Left colon (tissue), 2 donors: ENCODE measurements at regions of chr17 and their contacts with region 1.

Region 1: DNA sequence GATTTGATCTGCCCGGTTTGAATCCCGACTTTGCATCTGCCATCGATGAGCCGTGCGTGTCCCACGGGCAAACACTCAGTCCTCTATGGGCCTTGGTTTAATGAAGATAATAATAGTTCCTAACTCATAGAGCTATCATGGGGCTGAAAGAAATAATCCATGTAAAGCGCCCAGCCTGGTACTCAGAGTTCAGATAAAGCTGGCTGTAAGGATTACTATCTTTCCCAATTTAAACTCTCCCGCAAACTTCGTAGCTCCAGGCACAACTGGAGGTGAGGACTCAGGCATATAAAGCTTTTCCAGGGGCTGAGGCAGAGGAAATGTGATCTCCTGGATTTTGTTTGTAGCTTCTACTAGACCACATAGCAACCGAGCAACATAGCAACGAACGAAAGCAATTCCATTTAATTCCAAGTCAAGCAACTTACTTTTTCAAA is 16.3 kb downstream of the ALOX15 start:
- DNase-seq: no peak
- ATAC-seq: no peak

Region 2: GRCh38 chr17:4420692-4421131 is 204.5 kb before region 1 on chr17:
- intact Hi-C with region 1: loop called in 1 of 2 experiments (anchors 10 kb)
- DNase-seq: peak; percentile 46 to 47
- ATAC-seq: peak; percentile 94

Region 3: DNA sequence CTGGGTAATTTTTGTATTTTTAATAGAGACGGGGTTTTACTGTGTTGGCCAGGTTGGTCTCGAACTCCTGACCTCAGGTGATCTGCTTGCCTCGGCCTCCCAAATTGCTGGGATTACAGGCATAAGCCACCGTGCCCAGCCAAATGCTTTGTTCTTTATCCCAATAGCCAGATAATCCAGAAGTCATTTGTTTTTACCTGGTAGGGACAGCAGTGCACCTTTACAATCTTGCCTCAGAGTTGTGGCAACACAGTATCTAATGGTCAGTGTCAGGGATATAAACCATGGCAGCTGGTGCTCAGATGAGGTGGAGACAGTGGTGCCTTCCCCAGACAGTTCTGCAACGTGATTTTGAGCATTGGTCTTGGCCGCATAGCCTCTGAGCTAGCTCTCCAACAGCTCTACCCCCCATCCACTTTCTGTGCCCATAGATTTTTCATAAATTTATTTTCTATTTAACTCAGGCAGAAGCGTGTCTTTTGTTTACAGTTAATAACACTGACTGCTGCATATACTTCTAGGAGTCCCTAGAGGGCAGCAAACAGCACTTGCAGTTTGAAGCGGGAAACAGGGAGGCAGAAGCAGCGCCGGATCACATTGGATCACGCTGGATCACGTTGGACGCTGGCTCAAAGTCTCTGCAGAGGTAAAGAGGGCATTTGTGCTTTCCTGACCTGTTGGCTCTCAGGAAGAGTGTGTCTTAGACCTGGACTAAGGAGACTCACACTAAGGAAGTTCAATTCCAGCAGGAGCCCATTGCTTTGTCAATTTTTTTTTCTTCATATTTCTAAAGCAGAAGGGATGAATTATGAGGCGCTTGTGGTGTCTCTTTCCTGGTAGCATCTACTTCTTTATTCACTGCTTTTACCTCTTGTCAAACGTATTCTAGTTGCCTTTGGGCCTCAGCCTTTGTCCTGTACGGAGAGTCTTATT is 59.7 kb before region 1 on chr17:
- intact Hi-C with region 1: loop called (anchors 2 to 10 kb)
- DNase-seq: peak; percentile 72 to 81
- ATAC-seq: peak; percentile 71

Region 4: DNA sequence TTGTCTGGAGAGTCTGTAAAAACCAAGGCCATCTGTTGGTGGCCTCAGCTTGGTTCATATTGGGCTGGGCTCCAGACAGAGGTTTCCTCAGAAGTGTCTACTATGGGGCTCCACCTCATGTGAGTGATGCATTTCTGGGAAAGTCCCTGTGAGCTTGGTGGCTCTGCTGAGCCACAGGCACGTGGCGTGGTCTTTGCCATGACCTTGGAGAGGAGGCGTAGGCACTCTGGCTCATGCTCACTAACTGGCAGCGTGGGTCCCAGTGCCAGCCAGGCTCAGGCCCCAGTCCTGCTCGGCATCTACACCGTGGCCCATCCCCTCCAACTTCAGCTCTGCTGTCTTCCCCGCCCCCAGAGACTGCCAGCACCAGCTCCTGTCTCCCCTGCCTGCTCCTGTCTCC is 51.5 kb before region 1 on chr17:
- intact Hi-C with region 1: loop called in 1 of 2 experiments (anchors 10 kb)
- DNase-seq: no peak
- ATAC-seq: no peak

Region 5: DNA sequence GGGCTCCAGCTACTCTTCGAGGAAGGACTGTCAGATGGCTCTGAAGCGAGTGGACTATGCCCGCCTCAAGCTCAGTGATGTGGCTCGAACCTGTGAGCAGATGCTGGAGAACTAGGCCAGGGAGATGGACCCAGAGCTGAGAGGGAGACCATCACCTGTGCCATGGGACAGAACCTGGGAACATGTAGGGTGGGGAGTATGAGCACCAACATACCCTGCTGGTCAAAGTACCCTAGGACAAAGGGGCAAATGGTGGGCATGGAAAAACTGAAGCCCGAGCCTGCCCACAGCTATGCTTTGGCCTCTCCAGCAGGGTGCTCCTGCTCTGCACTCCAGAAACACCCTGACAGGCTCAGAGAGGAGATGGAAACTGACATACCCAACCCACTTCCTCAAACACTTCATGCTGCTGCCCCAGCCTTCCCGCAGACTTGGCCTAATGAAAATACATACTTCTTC is 107.9 kb after region 1 on chr17:
- intact Hi-C with region 1: no loop called
- DNase-seq: no peak
- ATAC-seq: no peak